Activated CD8-positive, alpha-beta T cell treated with anti-CD3 and anti-CD28 coated beads, Interleukin-2, amount 10 ng/mL, durations not matched to agents 7 days and 5 days (primary cell): ENCODE measurements at regions of chr15 and their contacts with region 1.

Region 1: GRCh38 chr15:50876989-50877360 is 31.5 kb upstream of the AP4E1 start:
- DNase-seq: peak; percentile 84
- ATAC-seq: peak; percentile 54
- H3K4me3 Mint-ChIP-seq: peak overlapping the region; percentile 71
- H3K27ac Mint-ChIP-seq: peak overlapping the region; percentile 57
- H3K4me1 Mint-ChIP-seq: peaks cover 57% of the 10 kb centered on the region
- H3K27me3 Mint-ChIP-seq: peaks cover 2% of the 10 kb centered on the region

Region 2: DNA sequence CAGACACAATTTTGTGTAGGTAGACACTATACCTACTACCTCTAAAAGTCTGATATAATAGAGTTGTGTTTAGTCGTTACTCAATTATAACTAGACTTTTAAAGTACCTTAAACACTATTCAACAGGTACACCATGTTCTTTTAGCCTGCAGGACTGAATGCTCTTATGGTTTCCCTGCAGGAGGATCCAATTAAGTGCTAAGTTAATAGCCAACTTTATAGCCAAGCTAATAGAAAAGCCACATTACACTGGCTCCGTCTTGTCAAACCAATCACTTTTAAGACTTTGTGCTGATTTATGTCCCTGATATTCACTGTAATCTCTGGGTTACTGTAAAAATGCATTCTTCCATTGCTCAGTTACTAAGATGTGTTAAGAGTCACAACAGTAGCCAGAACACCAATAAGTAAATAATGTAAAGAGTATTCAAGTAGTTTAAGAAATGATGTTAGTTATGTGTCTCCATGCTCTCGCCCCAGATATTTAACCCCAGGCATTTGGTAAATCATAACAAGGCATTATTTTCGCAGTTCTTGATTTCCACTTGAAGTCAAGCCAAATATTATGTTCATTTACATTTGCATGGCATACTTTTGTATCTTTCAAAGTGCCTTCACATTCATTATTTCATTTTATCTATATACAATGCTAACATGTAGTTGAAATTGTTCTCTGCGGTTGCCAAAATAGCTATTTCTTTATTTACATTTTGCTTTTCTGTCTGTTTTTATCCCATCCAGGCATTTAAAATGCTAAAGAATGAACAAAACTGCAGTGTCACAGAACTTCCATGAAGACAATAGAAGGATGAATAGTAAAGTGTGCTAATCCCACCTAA is 11.2 kb before region 1 on chr15:
- CTCF ChIA-PET with region 1: interaction called, 12 read pairs
- POLR2A ChIA-PET with region 1: interaction called, 3 read pairs
- DNase-seq: no peak
- ATAC-seq: no peak
- H3K4me3 Mint-ChIP-seq: no peak overlapping the region
- H3K27ac Mint-ChIP-seq: no peak overlapping the region
- H3K4me1 Mint-ChIP-seq: no peaks in the 10 kb centered on the region
- H3K27me3 Mint-ChIP-seq: peaks cover 9% of the 10 kb centered on the region

Region 3: GRCh38 chr15:50908210-50909009 is 31.4 kb after region 1 on chr15 and contains the start of gene AP4E1:
- CTCF ChIA-PET with region 1: interaction called, 7 read pairs
- POLR2A ChIA-PET with region 1: interaction called, 18 read pairs
- DNase-seq: peak; percentile 96
- ATAC-seq: peak; percentile 64
- H3K4me3 Mint-ChIP-seq: peak within 1 kb of the TSS; percentile 87
- H3K27ac Mint-ChIP-seq: peak within 1 kb of the TSS; percentile 98
- H3K4me1 Mint-ChIP-seq: peaks cover 22% of the 10 kb centered on the region
- H3K27me3 Mint-ChIP-seq: no peaks in the 10 kb centered on the region
- total RNA-seq, gene AP4E1: 15.9 to 20.0 TPM